Ascending aorta (tissue), 2 donors: ENCODE measurements at regions of chr4 and their contacts with region 1.

Region 1: GRCh38 chr4:150010525-150011126 is 67.6 kb upstream of the DCLK2 start:
- DNase-seq: peak in 1 of 2 donors; percentile 68
- H3K4me3 ChIP-seq: no peak overlapping the region
- H3K27ac ChIP-seq: no peak overlapping the region
- H3K4me1 ChIP-seq: peaks cover 4 to 19% of the 10 kb centered on the region in 2 donors
- H3K27me3 ChIP-seq: no peaks in the 10 kb centered on the region
- CTCF ChIP-seq: peak; percentile 39 to 59 (median 54)

Region 2: GRCh38 chr4:150140774-150141400 is 130.3 kb after region 1 on chr4:
- intact Hi-C with region 1: loop called (anchors 5 kb)
- DNase-seq: no peak
- H3K4me3 ChIP-seq: no peak overlapping the region
- H3K27ac ChIP-seq: peak overlapping the region in 1 of 2 donors; percentile 65
- H3K4me1 ChIP-seq: peaks cover 0 to 33% of the 10 kb centered on the region in 2 donors
- H3K27me3 ChIP-seq: no peaks in the 10 kb centered on the region
- CTCF ChIP-seq: no peak

Region 3: GRCh38 chr4:150209140-150209829 is 198.7 kb after region 1 on chr4:
- intact Hi-C with region 1: loop called (anchors 2 kb)
- DNase-seq: peak in 1 of 2 donors; percentile 85
- H3K4me3 ChIP-seq: no peak overlapping the region
- H3K27ac ChIP-seq: no peak overlapping the region
- H3K4me1 ChIP-seq: peaks cover 0 to 4% of the 10 kb centered on the region in 2 donors
- H3K27me3 ChIP-seq: no peaks in the 10 kb centered on the region
- CTCF ChIP-seq: peak; percentile 31 to 61 (median 46)

Region 4: DNA sequence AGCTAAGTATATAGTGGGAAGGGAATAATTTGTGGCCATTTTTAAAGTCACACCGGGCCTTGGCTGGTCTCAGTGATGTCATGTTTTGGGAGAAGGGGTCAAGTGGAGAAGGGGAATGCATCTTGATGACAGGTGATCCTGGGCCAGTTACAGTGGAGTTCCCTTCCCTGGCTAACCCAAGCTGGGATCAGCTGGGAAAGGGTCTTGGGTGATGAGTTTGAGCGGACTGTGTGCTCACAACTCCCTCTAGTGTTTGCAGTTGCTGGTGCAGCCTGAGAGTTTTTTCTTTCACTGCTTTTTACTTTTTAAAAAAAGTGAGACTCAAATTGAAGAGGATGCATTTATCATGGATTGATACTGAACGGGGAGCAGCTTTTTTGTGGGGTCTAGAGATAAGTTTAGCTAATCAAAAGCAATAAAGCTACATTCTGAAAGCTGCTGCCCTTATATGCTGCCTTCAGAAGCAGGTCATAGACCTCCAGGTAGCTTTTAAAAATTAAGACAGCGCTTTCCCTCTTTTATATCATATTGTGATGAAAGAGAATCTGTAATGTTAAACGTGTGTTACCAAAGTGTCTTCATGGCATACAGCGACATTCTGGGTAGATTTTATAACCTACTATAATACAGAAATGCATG is 232.3 kb after region 1 on chr4:
- intact Hi-C with region 1: loop called (anchors 1 kb)
- DNase-seq: no peak
- H3K4me3 ChIP-seq: no peak overlapping the region
- H3K27ac ChIP-seq: no peak overlapping the region
- H3K4me1 ChIP-seq: peaks cover 0 to 15% of the 10 kb centered on the region in 2 donors
- H3K27me3 ChIP-seq: no peaks in the 10 kb centered on the region
- CTCF ChIP-seq: peak; percentile 44 to 92 (median 85)